ENCODE measurements at regions of chr11 and their contacts with region 1.

Region 1: GRCh38 chr11:57432714-57433163 is 5.8 kb upstream of the SLC43A3 start:
- DNase-seq: no peak
- H3K4me3 ChIP-seq: no peak overlapping the region
- H3K27ac ChIP-seq: no peak overlapping the region
- H3K4me1 ChIP-seq: peaks cover 0 to 19% (median 8%) of the 10 kb centered on the region in 4 donors
- H3K27me3 ChIP-seq: no peaks in the 10 kb centered on the region
- CTCF ChIP-seq: no peak

Region 2: GRCh38 chr11:57345555-57346211 is 87.1 kb before region 1 on chr11:
- intact Hi-C with region 1: loop called (anchors 10 kb)
- DNase-seq: peak in 1 of 2 donors; percentile 74
- H3K4me3 ChIP-seq: no peak overlapping the region
- H3K27ac ChIP-seq: no peak overlapping the region
- H3K4me1 ChIP-seq: peaks cover 0 to 9% (median 4%) of the 10 kb centered on the region in 4 donors
- H3K27me3 ChIP-seq: peaks cover 0 to 4% of the 10 kb centered on the region in 2 donors
- CTCF ChIP-seq: peak; percentile 57 to 75

Region 3: GRCh38 chr11:57913715-57914704 is 481.3 kb after region 1 on chr11:
- intact Hi-C with region 1: no loop called
- DNase-seq: no peak
- H3K4me3 ChIP-seq: no peak overlapping the region
- H3K27ac ChIP-seq: no peak overlapping the region
- H3K4me1 ChIP-seq: no peaks in the 10 kb centered on the region
- H3K27me3 ChIP-seq: no peaks in the 10 kb centered on the region
- CTCF ChIP-seq: no peak